ENCODE measurements at regions of chr7 and their contacts with region 1.

Region 1: GRCh38 chr7:92904292-92905131 is 68.1 kb upstream of the CDK6 start:
- DNase-seq: peak; percentile 96
- H3K4me3 Mint-ChIP-seq: peak overlapping the region; percentile 18
- H3K27ac Mint-ChIP-seq: peak overlapping the region; percentile 84
- H3K4me1 Mint-ChIP-seq: peaks cover 26% of the 10 kb centered on the region
- H3K27me3 Mint-ChIP-seq: peaks cover 5% of the 10 kb centered on the region

Region 2: DNA sequence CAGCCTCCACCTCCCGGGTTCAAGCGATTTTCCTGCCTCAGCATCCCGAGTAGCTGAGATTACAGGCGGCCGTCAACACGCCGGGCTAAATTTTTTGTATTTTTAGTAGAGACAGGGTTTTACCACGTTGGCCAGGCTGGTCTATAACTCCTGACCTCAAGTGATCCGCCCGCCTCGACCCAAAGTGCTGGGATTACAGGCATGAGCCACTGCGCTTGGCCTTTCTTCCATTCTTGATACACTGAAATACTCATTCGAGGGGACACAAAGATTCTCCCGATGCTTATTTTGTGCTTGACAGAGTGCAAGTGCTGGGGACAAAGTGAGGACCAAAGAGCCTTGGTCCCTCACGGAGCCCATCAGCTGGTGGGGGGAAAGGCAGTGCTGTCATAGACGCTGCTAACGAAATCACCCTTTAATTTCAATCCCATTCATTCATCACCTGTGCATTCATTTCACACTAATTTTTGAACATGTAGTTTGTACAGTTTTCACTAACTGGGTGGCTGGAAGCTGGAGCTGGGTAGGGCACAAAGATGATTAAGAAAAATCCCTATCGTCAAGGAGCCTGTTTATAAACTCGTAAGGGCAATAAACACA is 313.7 kb before region 1 on chr7:
- CTCF ChIA-PET with region 1: no interaction called
- intact Hi-C with region 1: loop called (anchors 1 kb)
- DNase-seq: no peak
- H3K4me3 Mint-ChIP-seq: peak overlapping the region; percentile 86
- H3K27ac Mint-ChIP-seq: no peak overlapping the region
- H3K4me1 Mint-ChIP-seq: peaks cover 39% of the 10 kb centered on the region
- H3K27me3 Mint-ChIP-seq: peaks cover 3% of the 10 kb centered on the region

Region 3: GRCh38 chr7:92691578-92691977 is 212.9 kb before region 1 on chr7:
- CTCF ChIA-PET with region 1: interaction called, 3 read pairs
- intact Hi-C with region 1: loop called (anchors 1 kb)
- DNase-seq: peak; percentile 46
- H3K4me3 Mint-ChIP-seq: no peak overlapping the region
- H3K27ac Mint-ChIP-seq: peak overlapping the region; percentile 87
- H3K4me1 Mint-ChIP-seq: peaks cover 70% of the 10 kb centered on the region
- H3K27me3 Mint-ChIP-seq: no peaks in the 10 kb centered on the region

Region 4: GRCh38 chr7:92809397-92810241 is 94.9 kb before region 1 on chr7:
- CTCF ChIA-PET with region 1: no interaction called
- intact Hi-C with region 1: loop called (anchors 1 kb)
- DNase-seq: peak; percentile 78
- H3K4me3 Mint-ChIP-seq: no peak overlapping the region
- H3K27ac Mint-ChIP-seq: peak overlapping the region; percentile 54
- H3K4me1 Mint-ChIP-seq: peaks cover 72% of the 10 kb centered on the region
- H3K27me3 Mint-ChIP-seq: no peaks in the 10 kb centered on the region

Region 5: DNA sequence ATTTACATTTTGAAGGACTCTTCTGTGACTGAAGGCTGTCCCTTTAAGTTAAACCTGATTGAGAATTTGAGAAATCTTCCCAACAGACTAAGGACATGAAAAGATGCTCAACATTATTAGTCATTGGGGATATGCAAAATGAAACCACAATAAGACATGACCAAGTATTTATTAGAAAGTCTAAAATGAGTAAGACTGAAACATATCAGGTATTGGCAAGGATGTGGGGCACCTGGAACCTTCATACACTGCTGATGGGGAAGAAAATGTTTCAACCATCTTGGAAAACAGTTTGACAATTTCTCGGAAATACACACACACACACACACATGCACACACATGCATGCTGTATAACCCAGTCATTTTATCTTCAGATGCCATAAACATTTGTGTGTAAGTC is 64.0 kb after region 1 on chr7:
- CTCF ChIA-PET with region 1: no interaction called
- intact Hi-C with region 1: loop called (anchors 1 kb)
- DNase-seq: no peak
- H3K4me3 Mint-ChIP-seq: no peak overlapping the region
- H3K27ac Mint-ChIP-seq: no peak overlapping the region
- H3K4me1 Mint-ChIP-seq: peaks cover 13% of the 10 kb centered on the region
- H3K27me3 Mint-ChIP-seq: peaks cover 7% of the 10 kb centered on the region

Region 6: GRCh38 chr7:93185303-93186027 is 281.0 kb after region 1 on chr7:
- CTCF ChIA-PET with region 1: no interaction called
- intact Hi-C with region 1: loop called (anchors 1 kb)
- DNase-seq: peak; percentile 42
- H3K4me3 Mint-ChIP-seq: no peak overlapping the region
- H3K27ac Mint-ChIP-seq: no peak overlapping the region
- H3K4me1 Mint-ChIP-seq: peaks cover 12% of the 10 kb centered on the region
- H3K27me3 Mint-ChIP-seq: peaks cover 43% of the 10 kb centered on the region